ENCODE measurements at regions of chr2 and their contacts with region 1.

Region 1: DNA sequence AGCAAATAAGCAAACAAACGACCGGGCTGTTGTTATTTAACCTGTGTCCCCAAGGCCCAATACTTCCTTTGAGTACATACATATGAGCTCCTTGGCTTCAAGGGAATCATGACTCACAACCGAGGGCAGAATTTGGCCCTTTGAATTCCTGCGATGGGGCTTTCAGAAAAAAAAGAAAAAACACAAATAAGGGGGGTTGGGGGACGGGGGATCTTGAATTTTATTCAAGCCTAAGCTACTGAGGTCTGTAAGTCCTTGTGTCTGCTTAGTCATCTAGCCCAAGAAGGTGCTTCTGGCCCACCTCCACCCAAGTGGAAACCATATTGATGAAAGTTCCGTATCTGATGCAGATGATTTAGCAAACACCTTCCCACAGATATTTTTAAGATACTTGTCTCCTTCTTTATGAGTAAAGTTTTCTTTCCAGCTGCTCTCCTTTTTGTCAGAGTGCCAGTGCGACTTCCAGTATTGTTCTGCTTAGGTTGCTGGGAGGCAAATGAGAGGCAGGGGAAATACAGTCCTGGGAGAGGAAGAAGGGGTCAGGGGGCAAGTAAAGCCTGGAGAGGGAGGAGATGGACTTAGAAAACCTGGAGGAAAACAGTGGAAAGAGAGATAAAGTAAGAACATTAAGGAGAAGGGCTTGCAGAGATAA is 169.6 kb downstream of the ZEB2 start:
- DNase-seq: no peak
- H3K4me3 ChIP-seq: no peak overlapping the region
- H3K27ac ChIP-seq: peak overlapping the region; percentile 55 to 68
- H3K4me1 ChIP-seq: peaks cover 3 to 10% of the 10 kb centered on the region in 2 donors
- H3K27me3 ChIP-seq: no peaks in the 10 kb centered on the region
- CTCF ChIP-seq: no peak

Region 2: GRCh38 chr2:144256996-144257707 is 93.1 kb before region 1 on chr2:
- intact Hi-C with region 1: no loop called
- DNase-seq: no peak
- H3K4me3 ChIP-seq: no peak overlapping the region
- H3K27ac ChIP-seq: no peak overlapping the region
- H3K4me1 ChIP-seq: no peaks in the 10 kb centered on the region
- H3K27me3 ChIP-seq: no peaks in the 10 kb centered on the region
- CTCF ChIP-seq: no peak

Region 3: DNA sequence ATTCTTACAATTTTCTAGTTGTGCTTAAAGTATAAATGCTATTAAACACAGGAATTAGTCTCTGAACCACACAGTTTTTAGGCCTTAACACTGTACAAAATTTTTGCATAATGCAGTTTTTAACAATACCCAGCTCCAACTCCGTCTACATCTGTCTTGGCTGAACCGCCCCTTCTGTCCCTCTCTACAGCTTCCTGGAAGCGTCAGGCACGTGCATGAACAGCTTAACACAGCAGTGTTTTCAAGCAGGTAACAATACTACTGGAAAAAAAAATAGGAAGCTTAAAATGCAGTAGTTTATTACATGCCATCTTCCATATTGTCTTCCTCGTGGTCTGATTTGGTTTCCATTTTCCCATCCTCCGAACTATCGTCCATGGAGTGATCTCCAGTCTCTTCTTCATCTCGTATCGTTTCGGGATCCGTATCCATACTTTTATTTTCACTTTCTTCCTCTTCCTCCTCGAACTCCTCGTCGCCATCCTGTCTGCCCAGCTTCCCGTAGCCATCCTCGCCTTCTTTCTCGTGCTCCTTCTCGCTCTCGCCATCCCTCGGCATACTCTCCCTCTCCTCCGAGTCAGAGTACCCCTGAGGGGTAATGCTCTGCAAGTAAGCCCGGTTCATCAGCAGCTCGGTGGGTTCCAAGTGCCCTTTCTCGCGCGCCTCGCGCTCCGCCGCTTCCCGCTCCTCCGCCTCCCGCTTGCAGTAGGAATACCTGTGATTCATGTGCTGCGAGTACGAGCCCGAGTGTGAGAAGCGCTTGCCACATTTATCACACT is 39.1 kb after region 1 on chr2:
- intact Hi-C with region 1: loop called (anchors 5 kb)
- DNase-seq: no peak
- H3K4me3 ChIP-seq: no peak overlapping the region
- H3K27ac ChIP-seq: peak overlapping the region; percentile 35 to 55
- H3K4me1 ChIP-seq: no peaks in the 10 kb centered on the region
- H3K27me3 ChIP-seq: no peaks in the 10 kb centered on the region
- CTCF ChIP-seq: no peak